Gastrocnemius medialis (tissue), 4 donors: ENCODE measurements at regions of chr17 and their contacts with region 1.

Region 1: GRCh38 chr17:71633391-71633849 is 487.4 kb upstream of the SOX9 start:
- DNase-seq: no peak
- ATAC-seq: no peak
- H3K4me3 ChIP-seq: no peak overlapping the region
- H3K27ac ChIP-seq: no peak overlapping the region
- H3K4me1 ChIP-seq: no peaks in the 10 kb centered on the region
- H3K27me3 ChIP-seq: no peaks in the 10 kb centered on the region
- CTCF ChIP-seq: no peak
- POLR2A ChIP-seq: no peak

Region 2: GRCh38 chr17:71511266-71511995 is 122.0 kb before region 1 on chr17:
- in situ Hi-C with region 1: no loop called
- intact Hi-C with region 1: no loop called
- DNase-seq: no peak
- ATAC-seq: no peak
- H3K4me3 ChIP-seq: no peak overlapping the region
- H3K27ac ChIP-seq: no peak overlapping the region
- H3K4me1 ChIP-seq: no peaks in the 10 kb centered on the region
- H3K27me3 ChIP-seq: no peaks in the 10 kb centered on the region
- CTCF ChIP-seq: no peak
- POLR2A ChIP-seq: no peak

Region 3: GRCh38 chr17:71572343-71572742 is 61.1 kb before region 1 on chr17:
- in situ Hi-C with region 1: loop called in 1 of 4 experiments (anchors 10 kb)
- intact Hi-C with region 1: no loop called
- DNase-seq: no peak
- ATAC-seq: no peak
- H3K4me3 ChIP-seq: no peak overlapping the region
- H3K27ac ChIP-seq: no peak overlapping the region
- H3K4me1 ChIP-seq: no peaks in the 10 kb centered on the region
- H3K27me3 ChIP-seq: no peaks in the 10 kb centered on the region
- CTCF ChIP-seq: no peak
- POLR2A ChIP-seq: no peak